ENCODE measurements at regions of chr1 and their contacts with region 1.

Region 1: DNA sequence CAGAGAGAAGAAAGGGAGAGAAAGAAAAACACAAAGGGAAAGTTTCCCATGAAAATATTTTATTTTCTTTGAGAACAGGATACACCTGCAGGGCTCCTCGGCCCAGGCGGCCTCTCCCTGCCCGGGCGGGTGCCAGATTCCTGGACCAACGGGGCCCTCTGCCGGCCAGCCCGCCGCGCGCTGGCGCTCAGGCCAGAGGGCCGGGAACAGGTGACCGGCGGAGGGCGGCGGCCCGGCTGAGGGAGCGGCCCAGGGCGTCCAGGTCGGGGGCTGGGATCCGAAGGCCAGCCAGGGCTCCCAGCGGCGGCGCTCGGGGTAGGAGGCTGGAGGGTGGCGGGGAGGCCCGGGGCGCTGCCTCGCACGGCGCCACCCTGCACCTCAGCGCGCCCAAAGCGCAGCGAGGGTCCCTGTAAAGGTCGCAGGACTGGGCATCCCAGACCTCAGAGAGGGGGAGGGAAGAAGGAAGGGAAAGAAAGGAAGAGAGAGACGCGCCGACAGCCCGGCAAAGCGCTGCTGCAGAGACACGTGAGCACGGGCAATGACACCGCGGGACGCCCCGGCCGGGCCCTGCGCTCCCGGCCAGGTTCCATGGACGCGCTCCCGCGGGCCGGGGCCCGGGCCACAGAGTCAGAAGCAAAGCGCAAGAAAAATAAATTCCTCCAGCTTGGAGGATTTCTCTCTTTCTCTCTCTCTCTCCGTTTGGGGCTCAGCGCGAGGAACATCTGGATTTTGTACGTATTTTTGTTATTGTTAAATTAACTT is 927 bp downstream of the WNT9A start:
- ATAC-seq: peak; percentile 49 to 78 (median 72)
- H3K4me3 ChIP-seq: peak overlapping the region; percentile 42 to 62 (median 51)
- H3K27ac ChIP-seq: no peak overlapping the region
- H3K4me1 ChIP-seq: peaks cover 11 to 38% of the 10 kb centered on the region in 2 donors

Region 2: GRCh38 chr1:227489572-227489971 is 457.2 kb before region 1 on chr1:
- in situ Hi-C with region 1: loop called in 2 of 9 experiments (anchors 25 kb)
- ATAC-seq: no peak
- H3K4me3 ChIP-seq: no peak overlapping the region
- H3K27ac ChIP-seq: no peak overlapping the region
- H3K4me1 ChIP-seq: no peaks in the 10 kb centered on the region

Region 3: DNA sequence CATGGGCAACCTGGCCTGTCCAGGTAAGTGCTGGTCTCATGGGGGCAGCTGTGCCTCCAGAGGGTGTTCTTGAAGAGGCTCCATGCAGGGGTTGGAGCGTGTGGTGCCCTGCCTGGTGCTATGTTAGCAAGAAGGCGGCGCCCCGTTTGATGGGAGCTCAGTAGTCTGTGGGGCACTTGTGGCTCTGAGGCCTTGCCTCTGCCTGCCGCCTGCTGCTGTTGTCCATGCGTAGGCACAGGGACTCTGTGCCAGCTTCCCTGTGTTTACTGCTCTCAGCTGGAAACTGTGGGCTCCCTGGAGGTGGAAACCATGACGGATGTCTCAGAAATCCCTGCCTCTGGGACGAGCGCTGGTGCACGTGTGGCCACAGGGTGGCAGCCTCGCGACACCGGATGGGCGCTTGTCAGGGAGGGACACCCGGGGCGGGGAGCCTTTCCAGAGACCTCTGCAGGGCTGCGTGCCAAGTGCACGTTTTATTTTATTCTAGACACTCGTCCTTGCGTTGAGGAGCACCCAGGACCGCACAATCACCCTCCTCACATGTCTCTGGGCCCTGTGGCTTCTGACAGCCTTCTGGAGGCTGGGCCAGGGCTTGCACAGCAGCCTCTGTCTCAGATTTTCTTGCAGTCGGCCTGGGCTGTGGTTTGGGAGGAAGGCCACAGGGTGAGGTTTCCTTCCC is 184.4 kb before region 1 on chr1:
- in situ Hi-C with region 1: loop called in 4 of 9 experiments (anchors 10 to 25 kb)
- ATAC-seq: peak; percentile 51 to 98 (median 96)
- H3K4me3 ChIP-seq: peak overlapping the region in 1 of 5 donors; percentile 9
- H3K27ac ChIP-seq: no peak overlapping the region
- H3K4me1 ChIP-seq: peaks cover 3 to 4% of the 10 kb centered on the region in 2 donors

Region 4: GRCh38 chr1:227787513-227788270 is 159.1 kb before region 1 on chr1:
- in situ Hi-C with region 1: loop called in 5 of 9 experiments (anchors 25 kb)
- ATAC-seq: peak; percentile 66 to 89 (median 87)
- H3K4me3 ChIP-seq: peak overlapping the region; percentile 42 to 54 (median 49)
- H3K27ac ChIP-seq: peak overlapping the region in 1 of 2 donors; percentile 9
- H3K4me1 ChIP-seq: peaks cover 7 to 13% of the 10 kb centered on the region in 2 donors

Region 5: DNA sequence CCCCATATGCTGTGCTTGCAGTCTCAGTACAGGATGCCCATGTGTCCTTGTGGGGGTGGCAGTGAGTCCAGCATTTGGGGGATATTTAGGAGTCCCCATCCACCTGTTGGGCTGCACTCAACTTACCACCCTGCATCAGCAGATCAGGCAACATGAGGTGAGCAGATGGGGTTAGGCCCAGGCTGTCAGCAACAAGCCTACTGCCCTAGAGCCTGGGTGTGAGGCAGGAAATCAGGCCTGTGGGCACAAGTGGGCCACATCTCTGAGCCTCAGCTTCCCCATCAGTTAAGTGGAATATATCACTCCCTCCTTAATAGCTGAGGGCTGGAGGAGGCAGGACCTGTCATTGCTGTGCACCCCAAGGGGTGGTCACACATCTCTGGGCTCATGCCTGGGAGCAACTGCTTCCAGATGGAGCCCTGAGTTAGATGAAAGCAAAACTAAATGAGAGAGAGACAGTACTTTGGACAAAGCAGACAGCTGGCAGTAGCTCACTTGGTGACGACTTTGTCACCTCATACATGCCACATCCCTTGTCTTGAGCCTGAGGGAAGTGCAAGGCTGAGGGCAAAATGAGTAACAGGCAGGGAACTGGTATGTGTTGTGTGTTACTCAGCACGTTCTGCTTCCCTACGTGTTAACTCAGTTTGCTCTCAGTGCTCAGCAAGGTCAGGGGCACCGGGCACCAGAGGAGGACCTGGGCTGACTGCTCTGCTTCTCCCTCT is 411.4 kb after region 1 on chr1:
- in situ Hi-C with region 1: no loop called
- ATAC-seq: peak in 1 of 8 experiments; percentile 19
- H3K4me3 ChIP-seq: no peak overlapping the region
- H3K27ac ChIP-seq: no peak overlapping the region
- H3K4me1 ChIP-seq: no peaks in the 10 kb centered on the region

Measured in motor neuron (in vitro differentiated cells).